ENCODE measurements at regions of chr20 and their contacts with region 1.

Region 1: GRCh38 chr20:33443512-33444239 is at the start of gene SNTA1:
- DNase-seq: peak; percentile 95
- ATAC-seq: peak; percentile 92
- H3K4me3 Mint-ChIP-seq: peak within 1 kb of the TSS; percentile 83
- H3K27ac Mint-ChIP-seq: peak within 1 kb of the TSS; percentile 78
- H3K4me1 Mint-ChIP-seq: peaks cover 15% of the 10 kb centered on the region
- H3K27me3 Mint-ChIP-seq: no peaks in the 10 kb centered on the region
- total RNA-seq, gene SNTA1: 4.2 to 5.0 TPM

Region 2: DNA sequence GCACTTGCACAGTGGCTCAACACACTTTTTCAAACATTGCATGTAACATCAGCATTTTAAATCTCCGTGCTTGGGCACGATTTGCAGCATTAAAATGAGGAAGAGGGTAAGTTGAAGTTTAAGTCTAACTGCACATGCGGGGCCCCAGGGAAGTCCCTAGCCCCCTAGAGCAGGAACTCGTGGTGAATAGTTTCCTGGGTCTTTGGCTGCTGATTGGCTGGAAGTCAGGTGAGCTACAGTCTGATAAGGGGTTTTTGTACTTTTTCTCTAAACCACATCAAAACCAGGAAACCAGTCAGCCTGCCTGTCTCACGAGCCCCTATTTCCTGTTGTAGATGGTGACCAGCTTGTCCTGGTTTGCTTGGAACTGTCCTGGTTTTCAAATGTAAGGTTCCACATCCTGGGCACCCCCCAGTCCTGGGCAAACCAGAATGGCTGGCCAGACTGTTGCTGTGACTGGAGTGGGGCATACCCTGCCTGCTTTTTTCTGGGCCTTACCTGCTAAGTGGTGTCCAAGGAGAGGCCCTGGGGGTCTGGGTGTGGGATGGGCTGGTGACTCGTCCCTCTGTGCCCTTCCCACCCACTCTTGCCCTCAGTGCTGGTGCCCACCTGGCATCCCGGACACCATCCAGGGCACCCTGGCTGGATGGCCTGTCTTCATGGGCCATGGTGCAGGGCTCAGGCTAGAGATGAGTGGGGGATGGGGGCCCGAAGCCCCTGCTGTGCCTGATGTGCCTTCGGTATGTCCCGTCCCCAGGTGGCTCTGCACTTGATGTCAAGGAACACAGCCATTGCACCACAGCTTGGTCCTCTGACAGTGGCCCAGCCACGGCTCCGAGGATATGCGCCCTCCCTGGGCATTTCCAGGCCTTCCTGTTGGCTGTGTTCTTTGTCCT is 471.2 kb before region 1 on chr20:
- CTCF ChIA-PET with region 1: no interaction called
- POLR2A ChIA-PET with region 1: no interaction called
- intact Hi-C with region 1: loop called in 1 of 2 experiments (anchors 5 kb)
- DNase-seq: peak; percentile 88
- ATAC-seq: peak; percentile 70
- H3K4me3 Mint-ChIP-seq: no peak overlapping the region
- H3K27ac Mint-ChIP-seq: no peak overlapping the region
- H3K4me1 Mint-ChIP-seq: peaks cover 46% of the 10 kb centered on the region
- H3K27me3 Mint-ChIP-seq: no peaks in the 10 kb centered on the region

Region 3: GRCh38 chr20:33460711-33461110 is 17.0 kb after region 1 on chr20:
- CTCF ChIA-PET with region 1: interaction called, 3 read pairs
- POLR2A ChIA-PET with region 1: no interaction called
- intact Hi-C with region 1: loop called in 1 of 2 experiments (anchors 1 kb)
- DNase-seq: peak; percentile 35
- ATAC-seq: peak; percentile 43
- H3K4me3 Mint-ChIP-seq: no peak overlapping the region
- H3K27ac Mint-ChIP-seq: no peak overlapping the region
- H3K4me1 Mint-ChIP-seq: no peaks in the 10 kb centered on the region
- H3K27me3 Mint-ChIP-seq: no peaks in the 10 kb centered on the region

Region 4: GRCh38 chr20:33554914-33555420 is 111.3 kb after region 1 on chr20:
- CTCF ChIA-PET with region 1: no interaction called
- POLR2A ChIA-PET with region 1: interaction called, 3 read pairs
- intact Hi-C with region 1: loop called in 1 of 2 experiments (anchors 5 kb)
- DNase-seq: peak; percentile 44
- ATAC-seq: peak; percentile 99
- H3K4me3 Mint-ChIP-seq: no peak overlapping the region
- H3K27ac Mint-ChIP-seq: peak overlapping the region; percentile 77
- H3K4me1 Mint-ChIP-seq: peaks cover 30% of the 10 kb centered on the region
- H3K27me3 Mint-ChIP-seq: no peaks in the 10 kb centered on the region

Region 5: DNA sequence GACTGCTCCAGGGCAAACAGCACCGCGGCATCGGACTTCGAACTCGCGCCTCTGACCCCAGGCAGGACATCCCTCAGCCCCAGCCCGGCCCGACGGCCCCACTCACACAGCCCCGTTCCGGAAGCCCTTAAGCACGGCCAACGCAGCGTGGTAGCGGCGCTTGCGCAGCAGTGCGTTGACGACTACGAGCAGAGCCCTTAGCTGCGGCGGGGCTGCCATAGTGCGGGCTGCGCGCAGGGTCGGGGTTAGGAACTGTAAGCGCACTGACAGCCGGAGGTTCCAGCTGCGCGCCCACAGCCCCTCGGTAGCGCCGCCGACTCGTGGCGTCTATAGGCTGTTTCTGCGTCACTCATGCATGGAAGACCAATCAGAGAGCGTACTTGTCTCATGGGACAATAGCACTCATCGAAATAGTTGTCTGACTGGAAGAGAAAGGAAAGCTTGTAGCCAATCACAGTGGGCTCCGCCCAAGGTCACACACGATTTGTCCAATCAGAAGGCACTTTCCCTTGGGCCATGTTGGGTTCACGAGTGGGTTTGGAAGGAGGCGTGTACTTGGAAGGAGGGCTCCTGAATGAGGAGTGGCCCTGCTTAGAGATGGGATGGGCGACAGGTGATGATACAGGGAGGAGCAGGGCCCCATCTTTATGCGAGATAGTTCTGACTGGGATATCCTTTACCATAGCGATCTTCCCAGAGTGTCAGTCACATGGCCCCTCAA is 276.5 kb after region 1 on chr20 and contains the start of gene PXMP4:
- CTCF ChIA-PET with region 1: no interaction called
- POLR2A ChIA-PET with region 1: no interaction called
- intact Hi-C with region 1: loop called in 1 of 2 experiments (anchors 1 kb)
- DNase-seq: peak; percentile 92
- ATAC-seq: peak; percentile 99
- H3K4me3 Mint-ChIP-seq: peak within 1 kb of the TSS; percentile 88
- H3K27ac Mint-ChIP-seq: peak within 1 kb of the TSS; percentile 83
- H3K4me1 Mint-ChIP-seq: peaks cover 18% of the 10 kb centered on the region
- H3K27me3 Mint-ChIP-seq: no peaks in the 10 kb centered on the region
- total RNA-seq, gene PXMP4: 8.8 to 10.2 TPM

Region 6: DNA sequence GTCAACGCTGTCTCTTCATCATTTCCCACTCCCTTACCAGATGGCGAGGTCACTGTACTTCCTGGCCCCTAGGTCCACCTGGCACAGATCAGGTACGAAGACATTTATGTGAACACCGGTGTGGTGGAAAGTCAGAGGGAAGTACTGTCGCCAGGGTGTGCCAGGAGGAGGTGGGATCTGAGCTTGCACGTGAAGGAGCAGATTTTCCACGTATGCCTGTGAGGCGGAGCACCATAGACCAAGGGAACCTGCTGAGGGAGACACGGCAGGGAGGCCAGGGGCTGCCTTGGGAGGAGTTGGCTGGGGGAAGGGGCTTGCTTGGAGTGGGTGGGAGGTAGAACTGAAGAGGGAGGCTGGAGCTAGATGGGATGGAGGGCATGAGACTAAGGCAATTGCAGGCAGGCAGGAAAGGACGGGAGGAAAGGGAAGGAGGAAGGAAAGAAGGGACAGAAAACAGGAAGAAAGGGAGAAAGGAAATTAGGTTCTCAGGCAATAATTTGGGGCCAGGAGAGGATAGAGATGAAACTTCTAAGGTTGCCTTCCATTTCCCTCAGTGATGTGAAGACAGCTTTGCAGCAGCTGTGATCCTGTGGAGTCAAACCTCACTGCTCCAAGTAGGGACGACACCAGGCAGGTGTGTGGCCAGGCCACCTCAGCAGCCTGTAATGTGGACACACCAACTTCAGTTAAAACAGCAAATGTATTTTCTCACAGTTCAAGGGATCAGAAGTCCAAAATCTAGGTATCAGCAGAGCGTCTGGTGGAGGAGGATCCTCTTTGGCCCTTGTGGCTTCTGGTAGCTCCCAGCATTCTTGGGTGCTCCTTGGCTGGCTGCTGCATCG is 414.3 kb after region 1 on chr20:
- CTCF ChIA-PET with region 1: no interaction called
- POLR2A ChIA-PET with region 1: no interaction called
- intact Hi-C with region 1: no loop called
- DNase-seq: no peak
- ATAC-seq: no peak
- H3K4me3 Mint-ChIP-seq: no peak overlapping the region
- H3K27ac Mint-ChIP-seq: peak overlapping the region; percentile 48
- H3K4me1 Mint-ChIP-seq: peaks cover 35% of the 10 kb centered on the region
- H3K27me3 Mint-ChIP-seq: no peaks in the 10 kb centered on the region